ENCODE measurements at regions of chr19 and their contacts with region 1.

Region 1: DNA sequence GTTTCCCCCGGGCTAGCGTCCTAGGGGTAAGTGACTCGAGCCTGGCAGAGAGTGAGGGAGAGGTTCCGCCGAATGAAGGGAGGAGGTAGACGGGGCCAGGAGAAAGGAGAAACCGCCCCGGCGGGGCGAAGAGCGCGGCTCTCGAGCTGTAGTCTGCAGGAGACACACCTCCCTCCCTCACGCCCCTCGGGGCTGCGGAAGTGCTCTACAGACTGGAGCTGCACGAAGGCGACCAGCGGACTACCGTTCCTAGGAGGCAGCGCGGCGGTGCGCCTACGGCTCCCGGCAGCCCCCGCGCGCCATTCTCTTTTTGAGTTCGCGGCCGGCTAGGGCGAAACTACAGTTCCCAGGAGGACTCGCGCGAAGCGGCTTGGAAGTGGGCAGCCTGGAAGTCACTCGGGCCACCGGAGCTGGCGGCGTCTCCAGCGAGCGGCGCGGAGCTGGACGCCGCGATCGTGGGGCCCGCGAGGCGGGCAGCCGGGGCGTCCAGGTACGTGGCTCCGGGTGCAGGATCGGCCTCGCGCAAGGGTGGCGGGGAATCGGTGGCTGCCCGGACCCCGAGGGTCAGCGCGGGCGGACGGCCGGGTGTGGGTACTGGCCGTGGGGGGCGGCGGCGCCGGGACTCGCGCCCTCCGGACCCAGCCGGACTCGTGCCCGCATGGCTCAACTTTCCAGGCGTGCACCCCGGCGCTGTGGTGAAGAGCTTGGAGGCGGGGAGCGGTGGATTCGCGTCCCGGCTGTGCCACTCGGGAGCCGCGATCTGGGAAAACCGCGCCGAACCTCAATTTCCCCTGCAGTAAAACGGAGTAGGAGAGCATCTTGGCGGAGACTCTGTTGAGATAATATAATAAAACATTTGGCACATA is at the start of gene SIPA1L3:
- DNase-seq: peak; percentile 77 to 91 (median 89)
- ATAC-seq: peak; percentile 99
- H3K4me3 ChIP-seq: peak within 1 kb of the TSS; percentile 99
- H3K4me3 Mint-ChIP-seq: peak within 1 kb of the TSS; percentile 69 to 96 (median 90)
- H3K27ac ChIP-seq: peak within 1 kb of the TSS; percentile 89
- H3K27ac Mint-ChIP-seq: peak within 1 kb of the TSS; percentile 67 to 95 (median 90)
- H3K4me1 ChIP-seq: peaks cover 6 to 9% of the 10 kb centered on the region in 2 donors
- H3K4me1 Mint-ChIP-seq: peaks cover 24 to 39% (median 35%) of the 10 kb centered on the region in 7 donors
- H3K27me3 ChIP-seq: no peaks in the 10 kb centered on the region
- H3K27me3 Mint-ChIP-seq: peaks cover 0 to 2% (median 0%) of the 10 kb centered on the region in 5 donors
- total RNA-seq, gene SIPA1L3: 17.4 to 38.7 (median 34.8) TPM

Region 2: GRCh38 chr19:36114763-36115452 is 1792.2 kb before region 1 on chr19 and contains the start of gene POLR2I:
- CTCF ChIA-PET with region 1: no interaction called
- POLR2A ChIA-PET with region 1: no interaction called
- intact Hi-C with region 1: loop called in 1 of 2 experiments (anchors 5 kb)
- DNase-seq: peak; percentile 95 to 100 (median 99)
- ATAC-seq: peak; percentile 92
- H3K4me3 ChIP-seq: peak within 1 kb of the TSS; percentile 97
- H3K4me3 Mint-ChIP-seq: peak within 1 kb of the TSS; percentile 89 to 98 (median 96)
- H3K27ac ChIP-seq: peak within 1 kb of the TSS; percentile 90
- H3K27ac Mint-ChIP-seq: peak within 1 kb of the TSS; percentile 97 to 99 (median 98)
- H3K4me1 ChIP-seq: peaks cover 14 to 15% of the 10 kb centered on the region in 2 donors
- H3K4me1 Mint-ChIP-seq: peaks cover 27 to 54% (median 42%) of the 10 kb centered on the region in 7 donors
- H3K27me3 ChIP-seq: no peaks in the 10 kb centered on the region
- H3K27me3 Mint-ChIP-seq: peaks cover 0 to 5% (median 0%) of the 10 kb centered on the region in 5 donors
- total RNA-seq, gene POLR2I: 20.9 to 56.7 (median 44.7) TPM

Region 3: GRCh38 chr19:37370880-37371661 is 536.0 kb before region 1 on chr19 and contains the start of gene ZNF527:
- CTCF ChIA-PET with region 1: no interaction called
- POLR2A ChIA-PET with region 1: interaction called, 5 read pairs
- intact Hi-C with region 1: loop called (anchors 1 to 2 kb)
- DNase-seq: peak; percentile 92 to 97 (median 96)
- ATAC-seq: peak; percentile 96
- H3K4me3 ChIP-seq: peak within 1 kb of the TSS; percentile 85
- H3K4me3 Mint-ChIP-seq: peak within 1 kb of the TSS; percentile 92 to 100 (median 98)
- H3K27ac ChIP-seq: peak within 1 kb of the TSS; percentile 74
- H3K27ac Mint-ChIP-seq: peak within 1 kb of the TSS; percentile 87 to 99 (median 97)
- H3K4me1 ChIP-seq: peaks cover 0 to 8% of the 10 kb centered on the region in 2 donors
- H3K4me1 Mint-ChIP-seq: peaks cover 7 to 25% (median 17%) of the 10 kb centered on the region in 7 donors
- H3K27me3 ChIP-seq: no peaks in the 10 kb centered on the region
- H3K27me3 Mint-ChIP-seq: no peaks in the 10 kb centered on the region
- total RNA-seq, gene ZNF527: 5.6 to 13.6 (median 13.2) TPM

Region 4: DNA sequence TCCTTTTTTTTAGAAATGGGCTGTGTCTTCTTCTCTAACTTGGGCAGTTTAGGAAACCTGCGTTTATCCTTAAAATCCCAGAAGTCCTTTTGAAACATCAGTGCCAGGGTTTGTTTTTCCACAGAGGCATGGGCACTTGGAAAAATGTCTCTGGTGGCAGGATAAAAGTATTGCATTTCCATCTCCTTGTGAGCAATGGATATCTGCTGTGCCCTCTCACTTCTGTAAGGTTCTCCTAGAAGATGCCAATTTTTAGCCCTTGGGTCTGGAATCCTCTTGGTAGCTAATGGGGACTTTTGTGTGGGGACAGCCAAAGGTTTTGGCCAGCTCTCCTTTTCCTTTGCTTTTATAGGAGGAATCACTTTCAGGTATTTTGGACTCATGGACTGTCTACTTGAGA is 21.7 kb before region 1 on chr19:
- CTCF ChIA-PET with region 1: no interaction called
- POLR2A ChIA-PET with region 1: no interaction called
- intact Hi-C with region 1: no loop called
- DNase-seq: no peak
- ATAC-seq: no peak
- H3K4me3 ChIP-seq: no peak overlapping the region
- H3K4me3 Mint-ChIP-seq: no peak overlapping the region
- H3K27ac ChIP-seq: no peak overlapping the region
- H3K27ac Mint-ChIP-seq: no peak overlapping the region
- H3K4me1 ChIP-seq: no peaks in the 10 kb centered on the region
- H3K4me1 Mint-ChIP-seq: no peaks in the 10 kb centered on the region
- H3K27me3 ChIP-seq: no peaks in the 10 kb centered on the region
- H3K27me3 Mint-ChIP-seq: peaks cover 0 to 4% (median 0%) of the 10 kb centered on the region in 5 donors

Region 5: DNA sequence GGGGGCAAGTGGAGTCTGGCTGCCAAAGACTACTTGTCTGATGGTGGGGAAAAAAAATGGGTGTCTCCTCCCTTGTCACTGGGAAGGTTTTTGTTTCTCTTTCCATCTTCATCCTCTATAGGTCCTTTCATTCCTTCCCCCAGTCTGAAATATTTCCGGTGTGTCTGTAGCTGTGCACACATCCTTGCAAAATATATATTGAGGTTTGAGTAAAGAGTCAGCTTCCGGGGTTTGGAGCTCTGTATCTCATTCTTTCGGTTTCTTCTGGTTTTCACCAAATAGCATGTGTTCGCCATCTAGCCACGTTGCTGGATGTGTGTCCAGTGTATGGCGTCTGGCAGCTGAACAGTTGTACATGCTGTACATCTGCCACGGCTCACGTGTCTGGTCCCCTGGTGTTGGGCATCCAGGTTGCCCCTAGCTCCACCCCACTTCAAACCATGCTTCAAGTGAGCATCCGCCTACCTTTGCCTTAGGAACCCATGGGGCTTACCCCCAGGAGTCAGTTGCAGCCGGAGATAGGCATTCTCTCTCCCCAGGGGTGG is 142.1 kb after region 1 on chr19:
- CTCF ChIA-PET with region 1: interaction called, 7 read pairs
- POLR2A ChIA-PET with region 1: interaction called, 18 read pairs
- intact Hi-C with region 1: loop called (anchors 1 to 2 kb)
- DNase-seq: peak; percentile 20 to 87 (median 82)
- ATAC-seq: peak; percentile 89
- H3K4me3 ChIP-seq: peak overlapping the region; percentile 19
- H3K4me3 Mint-ChIP-seq: peak overlapping the region; percentile 71 to 91 (median 85)
- H3K27ac ChIP-seq: peak overlapping the region; percentile 74
- H3K27ac Mint-ChIP-seq: peak overlapping the region; percentile 94 to 100 (median 97)
- H3K4me1 ChIP-seq: peaks cover 20 to 36% of the 10 kb centered on the region in 2 donors
- H3K4me1 Mint-ChIP-seq: peaks cover 22 to 56% (median 44%) of the 10 kb centered on the region in 7 donors
- H3K27me3 ChIP-seq: no peaks in the 10 kb centered on the region
- H3K27me3 Mint-ChIP-seq: peaks cover 0 to 2% (median 0%) of the 10 kb centered on the region in 5 donors

Region 6: DNA sequence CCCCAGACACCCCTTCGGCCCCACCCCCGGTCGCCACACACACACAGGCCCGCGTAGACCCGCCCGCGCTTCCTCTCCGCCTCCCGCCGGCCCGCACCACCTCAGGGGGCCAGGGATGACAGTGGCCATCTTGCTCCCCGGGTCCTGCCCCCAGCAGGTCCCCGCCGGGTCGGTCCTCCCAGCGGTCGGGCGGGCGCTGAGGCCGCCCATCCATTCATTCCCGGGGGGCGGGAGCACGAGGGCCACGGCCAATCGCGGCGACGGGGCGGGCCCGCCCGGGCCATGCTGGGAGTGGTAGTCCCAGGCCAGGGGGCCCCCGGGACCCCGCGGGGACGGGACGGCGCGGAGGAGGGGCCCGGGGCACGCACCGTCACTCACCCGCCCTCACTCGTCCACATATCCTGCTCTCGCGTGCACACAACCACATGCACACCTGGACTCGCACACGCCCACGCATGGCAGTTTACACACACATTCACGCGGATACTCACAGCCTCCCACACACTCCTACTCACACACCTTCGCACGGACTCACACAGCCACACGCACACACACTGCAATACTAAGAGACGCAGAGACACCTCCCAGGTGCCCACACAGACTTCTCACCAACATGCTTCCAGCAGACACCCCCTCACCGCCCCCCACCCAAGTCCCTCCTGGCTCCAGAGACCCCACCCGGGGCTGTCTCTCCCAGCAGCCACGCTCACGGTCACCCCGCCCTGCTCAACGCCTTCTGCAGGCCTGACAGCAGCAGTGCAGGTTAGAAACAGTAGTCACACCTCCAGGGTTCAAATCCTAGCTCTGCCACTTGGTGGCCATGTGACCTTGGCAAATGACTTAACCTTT is 317.1 kb after region 1 on chr19 and contains the start of gene DPF1:
- CTCF ChIA-PET with region 1: no interaction called
- POLR2A ChIA-PET with region 1: no interaction called
- intact Hi-C with region 1: loop called (anchors 1 kb)
- DNase-seq: peak in 7 of 9 donors; percentile 8 to 66 (median 30)
- ATAC-seq: peak; percentile 76
- H3K4me3 ChIP-seq: peak within 1 kb of the TSS; percentile 41
- H3K4me3 Mint-ChIP-seq: peak within 1 kb of the TSS; percentile 64 to 94 (median 86)
- H3K27ac ChIP-seq: no peak within 1 kb of the TSS
- H3K27ac Mint-ChIP-seq: peak within 1 kb of the TSS in 3 of 9 donors; percentile 11 to 83 (median 29)
- H3K4me1 ChIP-seq: peaks cover 3 to 6% of the 10 kb centered on the region in 2 donors
- H3K4me1 Mint-ChIP-seq: peaks cover 15 to 32% (median 22%) of the 10 kb centered on the region in 7 donors
- H3K27me3 ChIP-seq: peaks cover 5 to 24% of the 10 kb centered on the region in 2 donors
- H3K27me3 Mint-ChIP-seq: peaks cover 56 to 75% (median 67%) of the 10 kb centered on the region in 5 donors
- total RNA-seq, gene DPF1: 0.46 to 0.51 TPM in 2 of 5 experiments, not detected in the others

Region 7: GRCh38 chr19:38255383-38256014 is 348.4 kb after region 1 on chr19:
- CTCF ChIA-PET with region 1: interaction called, 4 read pairs
- POLR2A ChIA-PET with region 1: no interaction called
- intact Hi-C with region 1: loop called in 1 of 2 experiments (anchors 1 kb)
- DNase-seq: peak in 1 of 9 donors; percentile 30
- ATAC-seq: peak; percentile 10
- H3K4me3 ChIP-seq: no peak overlapping the region
- H3K4me3 Mint-ChIP-seq: peak overlapping the region in 1 of 10 donors; percentile 87
- H3K27ac ChIP-seq: no peak overlapping the region
- H3K27ac Mint-ChIP-seq: peak overlapping the region in 1 of 9 donors; percentile 58
- H3K4me1 ChIP-seq: no peaks in the 10 kb centered on the region
- H3K4me1 Mint-ChIP-seq: peaks cover 0 to 37% (median 0%) of the 10 kb centered on the region in 7 donors
- H3K27me3 ChIP-seq: no peaks in the 10 kb centered on the region
- H3K27me3 Mint-ChIP-seq: peaks cover 12 to 33% (median 24%) of the 10 kb centered on the region in 5 donors

Region 8: DNA sequence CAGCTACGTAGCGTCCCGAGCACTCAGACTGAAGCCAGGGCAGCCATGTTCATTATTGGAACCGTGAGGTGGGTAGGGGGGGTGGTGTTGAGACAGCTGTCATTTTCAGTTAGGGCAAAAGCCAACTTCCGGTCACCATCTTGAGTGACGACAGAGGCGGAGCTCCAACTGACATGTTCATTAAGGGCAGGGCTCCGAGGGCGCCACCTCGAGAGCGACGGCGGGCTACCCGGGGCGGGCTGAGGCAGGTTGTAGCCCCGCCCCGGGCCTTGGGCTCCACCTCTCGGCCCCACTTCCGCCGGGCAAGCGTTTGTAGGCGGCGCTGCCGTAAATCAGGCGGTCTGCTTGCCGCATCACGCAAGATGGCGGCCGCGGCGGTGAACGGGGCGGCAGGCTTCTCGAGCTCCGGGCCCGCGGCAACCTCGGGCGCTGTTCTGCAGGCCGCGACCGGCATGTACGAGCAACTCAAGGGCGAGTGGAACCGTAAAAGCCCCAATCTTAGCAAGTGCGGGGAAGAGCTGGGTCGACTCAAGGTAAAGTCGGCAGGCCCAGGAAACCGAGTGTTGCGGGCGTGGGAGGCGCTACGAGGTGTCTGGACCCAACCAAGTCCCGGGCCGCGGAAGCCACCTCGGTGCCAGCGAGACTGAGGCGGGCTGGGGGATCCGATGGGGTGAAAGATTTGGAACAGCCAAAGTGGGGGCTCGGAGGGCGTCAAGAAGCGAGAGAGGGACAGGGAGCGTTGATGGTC is 467.5 kb after region 1 on chr19 and contains the start of gene PSMD8:
- CTCF ChIA-PET with region 1: interaction called, 5 read pairs
- POLR2A ChIA-PET with region 1: interaction called, 16 read pairs
- intact Hi-C with region 1: loop called (anchors 1 kb)
- DNase-seq: peak; percentile 95 to 99 (median 99)
- ATAC-seq: peak; percentile 99
- H3K4me3 ChIP-seq: peak within 1 kb of the TSS; percentile 96
- H3K4me3 Mint-ChIP-seq: peak within 1 kb of the TSS; percentile 96 to 100 (median 98)
- H3K27ac ChIP-seq: peak within 1 kb of the TSS; percentile 93
- H3K27ac Mint-ChIP-seq: peak within 1 kb of the TSS; percentile 90 to 99 (median 98)
- H3K4me1 ChIP-seq: peaks cover 17 to 19% of the 10 kb centered on the region in 2 donors
- H3K4me1 Mint-ChIP-seq: peaks cover 17 to 32% (median 29%) of the 10 kb centered on the region in 7 donors
- H3K27me3 ChIP-seq: peaks cover 0 to 4% of the 10 kb centered on the region in 2 donors
- H3K27me3 Mint-ChIP-seq: peaks cover 0 to 8% (median 2%) of the 10 kb centered on the region in 5 donors
- total RNA-seq, gene PSMD8: 68.4 to 181 (median 75.8) TPM